ENCODE measurements at regions of chr1 and their contacts with region 1.

Region 1: GRCh38 chr1:31789259-31790065 is 25.3 kb upstream of the ADGRB2 start:
- DNase-seq: peak; percentile 99
- ATAC-seq: peak; percentile 85
- H3K4me3 Mint-ChIP-seq: peak overlapping the region; percentile 75
- H3K27ac Mint-ChIP-seq: no peak overlapping the region
- H3K4me1 Mint-ChIP-seq: peaks cover 10% of the 10 kb centered on the region
- H3K27me3 Mint-ChIP-seq: no peaks in the 10 kb centered on the region

Region 2: DNA sequence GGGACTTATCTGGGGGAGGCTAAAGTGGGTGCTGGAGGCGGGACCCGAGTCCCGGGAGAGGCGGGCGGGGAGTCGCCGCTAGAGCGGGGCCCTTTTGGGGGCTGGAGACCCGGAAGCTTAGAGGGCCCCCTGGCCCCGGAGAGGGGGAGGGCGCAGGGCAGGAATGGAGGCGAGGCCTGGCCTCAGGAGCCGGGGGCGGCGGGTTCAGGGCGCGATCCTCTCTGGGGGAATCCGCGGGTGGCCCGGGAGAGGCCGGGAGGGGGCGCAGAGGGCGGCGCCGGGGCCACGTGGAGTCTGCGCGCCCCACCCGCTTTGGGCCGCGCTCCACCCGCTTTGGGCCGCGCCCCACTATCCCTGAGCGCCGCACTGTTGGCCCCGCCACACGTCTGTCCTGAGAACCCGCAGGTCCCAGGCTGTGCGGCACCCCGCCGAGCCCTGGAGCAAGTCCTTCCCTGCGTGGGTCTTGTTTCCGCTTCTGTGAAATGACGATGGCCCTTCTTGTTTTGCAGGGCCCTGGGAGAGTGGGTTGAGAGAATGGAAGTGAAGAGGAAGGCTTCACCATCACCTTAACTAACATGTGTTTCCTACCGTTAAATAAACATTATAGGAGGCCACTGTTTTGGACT is 634.1 kb before region 1 on chr1:
- CTCF ChIA-PET with region 1: no interaction called
- POLR2A ChIA-PET with region 1: no interaction called
- intact Hi-C with region 1: loop called in 1 of 2 experiments (anchors 1 kb)
- DNase-seq: peak; percentile 79
- ATAC-seq: peak; percentile 82
- H3K4me3 Mint-ChIP-seq: peak overlapping the region; percentile 88
- H3K27ac Mint-ChIP-seq: peak overlapping the region; percentile 87
- H3K4me1 Mint-ChIP-seq: peaks cover 8% of the 10 kb centered on the region
- H3K27me3 Mint-ChIP-seq: no peaks in the 10 kb centered on the region

Region 3: GRCh38 chr1:31458287-31458891 is 331.1 kb before region 1 on chr1:
- CTCF ChIA-PET with region 1: no interaction called
- POLR2A ChIA-PET with region 1: no interaction called
- intact Hi-C with region 1: no loop called
- DNase-seq: no peak
- ATAC-seq: no peak
- H3K4me3 Mint-ChIP-seq: no peak overlapping the region
- H3K27ac Mint-ChIP-seq: no peak overlapping the region
- H3K4me1 Mint-ChIP-seq: no peaks in the 10 kb centered on the region
- H3K27me3 Mint-ChIP-seq: peaks cover 18% of the 10 kb centered on the region

Region 4: GRCh38 chr1:31548907-31549808 is 240.3 kb before region 1 on chr1:
- CTCF ChIA-PET with region 1: interaction called, 3 read pairs
- POLR2A ChIA-PET with region 1: no interaction called
- intact Hi-C with region 1: loop called in 1 of 2 experiments (anchors 1 kb)
- DNase-seq: peak; percentile 93
- ATAC-seq: peak; percentile 91
- H3K4me3 Mint-ChIP-seq: peak overlapping the region; percentile 49
- H3K27ac Mint-ChIP-seq: peak overlapping the region; percentile 71
- H3K4me1 Mint-ChIP-seq: peaks cover 9% of the 10 kb centered on the region
- H3K27me3 Mint-ChIP-seq: peaks cover 8% of the 10 kb centered on the region

Region 5: GRCh38 chr1:31663622-31664452 is 125.6 kb before region 1 on chr1:
- CTCF ChIA-PET with region 1: interaction called, 27 read pairs
- POLR2A ChIA-PET with region 1: no interaction called
- intact Hi-C with region 1: loop called (anchors 1 kb)
- DNase-seq: peak; percentile 71
- ATAC-seq: peak; percentile 55
- H3K4me3 Mint-ChIP-seq: no peak overlapping the region
- H3K27ac Mint-ChIP-seq: no peak overlapping the region
- H3K4me1 Mint-ChIP-seq: no peaks in the 10 kb centered on the region
- H3K27me3 Mint-ChIP-seq: no peaks in the 10 kb centered on the region

Region 6: GRCh38 chr1:31745096-31745945 is 44.1 kb before region 1 on chr1:
- CTCF ChIA-PET with region 1: interaction called, 19 read pairs
- POLR2A ChIA-PET with region 1: interaction called, 3 read pairs
- intact Hi-C with region 1: loop called in 1 of 2 experiments (anchors 1 kb)
- DNase-seq: peak; percentile 80
- ATAC-seq: peak; percentile 91
- H3K4me3 Mint-ChIP-seq: no peak overlapping the region
- H3K27ac Mint-ChIP-seq: no peak overlapping the region
- H3K4me1 Mint-ChIP-seq: peaks cover 5% of the 10 kb centered on the region
- H3K27me3 Mint-ChIP-seq: no peaks in the 10 kb centered on the region

Region 7: GRCh38 chr1:31778763-31779488 is 10.5 kb before region 1 on chr1:
- CTCF ChIA-PET with region 1: interaction called, 15 read pairs
- POLR2A ChIA-PET with region 1: no interaction called
- intact Hi-C with region 1: no loop called
- DNase-seq: no peak
- ATAC-seq: no peak
- H3K4me3 Mint-ChIP-seq: no peak overlapping the region
- H3K27ac Mint-ChIP-seq: no peak overlapping the region
- H3K4me1 Mint-ChIP-seq: peaks cover 8% of the 10 kb centered on the region
- H3K27me3 Mint-ChIP-seq: peaks cover 16% of the 10 kb centered on the region

Region 8: GRCh38 chr1:32013386-32014198 is 224.1 kb after region 1 on chr1 and contains the start of gene KHDRBS1:
- CTCF ChIA-PET with region 1: interaction called, 5 read pairs
- POLR2A ChIA-PET with region 1: interaction called, 4 read pairs
- intact Hi-C with region 1: loop called in 1 of 2 experiments (anchors 1 kb)
- DNase-seq: peak; percentile 99
- ATAC-seq: peak; percentile 90
- H3K4me3 Mint-ChIP-seq: peak within 1 kb of the TSS; percentile 97
- H3K27ac Mint-ChIP-seq: peak within 1 kb of the TSS; percentile 95
- H3K4me1 Mint-ChIP-seq: peaks cover 27% of the 10 kb centered on the region
- H3K27me3 Mint-ChIP-seq: no peaks in the 10 kb centered on the region
- total RNA-seq, gene KHDRBS1: 198 to 206 TPM